Mammary epithelial cell (primary cell): ENCODE measurements at regions of chr19 and their contacts with region 1.

Region 1: DNA sequence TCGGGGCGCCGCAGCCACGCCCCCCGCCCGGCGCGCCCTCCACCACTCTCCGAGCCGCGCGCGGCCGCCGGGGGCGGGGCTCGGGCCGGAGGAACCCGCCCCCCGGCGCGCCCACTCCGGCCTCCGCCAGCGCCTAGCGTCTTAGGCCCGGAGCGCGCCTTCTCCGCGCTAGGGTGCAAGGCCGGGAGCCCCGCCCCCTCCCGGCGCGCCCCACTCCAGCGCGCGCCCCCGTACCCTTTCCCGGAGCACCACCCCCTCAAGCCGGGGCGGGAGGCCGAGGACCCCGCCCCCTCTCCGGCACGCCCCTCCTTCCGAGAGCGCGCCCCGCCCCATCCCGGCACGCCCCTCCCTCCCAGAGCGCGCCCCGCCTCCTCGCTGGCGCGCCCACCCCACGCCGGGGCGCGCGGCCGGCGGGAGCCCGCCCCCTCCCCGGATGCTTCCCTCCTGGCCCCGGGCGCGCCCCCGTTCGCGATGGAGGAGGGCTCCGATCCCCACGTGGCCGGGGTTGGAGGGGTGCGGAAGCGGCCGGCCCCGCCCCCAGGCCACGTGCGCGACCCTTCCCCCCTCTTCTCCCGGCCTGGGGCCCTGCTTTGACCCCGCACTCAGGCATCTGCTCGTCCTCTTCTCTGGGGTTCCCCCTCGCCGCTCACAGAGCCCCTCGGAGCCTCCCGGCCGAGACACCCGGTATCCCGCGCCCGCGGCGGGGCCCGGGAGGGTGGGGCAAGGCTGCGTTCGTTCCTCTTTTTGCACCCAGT is 524 bp upstream of the KLF16 start:
- DNase-seq: peak; percentile 91
- H3K4me3 ChIP-seq: peak overlapping the region; percentile 60 to 71 (median 65)
- H3K27ac ChIP-seq: peak overlapping the region; percentile 64
- H3K4me1 ChIP-seq: peaks cover 33% of the 10 kb centered on the region
- H3K27me3 ChIP-seq: no peaks in the 10 kb centered on the region
- CTCF ChIP-seq: no peak

Region 2: GRCh38 chr19:1875646-1876495 is 12.0 kb after region 1 on chr19:
- CTCF ChIA-PET with region 1: interaction called, 42 read pairs
- dilution Hi-C with region 1: no loop called
- in situ Hi-C with region 1: no loop called
- intact Hi-C with region 1: loop called (anchors 1 kb)
- DNase-seq: peak; percentile 86
- H3K4me3 ChIP-seq: peak overlapping the region; percentile 76 to 100 (median 88)
- H3K27ac ChIP-seq: peak overlapping the region; percentile 73
- H3K4me1 ChIP-seq: peaks cover 28% of the 10 kb centered on the region
- H3K27me3 ChIP-seq: no peaks in the 10 kb centered on the region
- CTCF ChIP-seq: no peak

Region 3: DNA sequence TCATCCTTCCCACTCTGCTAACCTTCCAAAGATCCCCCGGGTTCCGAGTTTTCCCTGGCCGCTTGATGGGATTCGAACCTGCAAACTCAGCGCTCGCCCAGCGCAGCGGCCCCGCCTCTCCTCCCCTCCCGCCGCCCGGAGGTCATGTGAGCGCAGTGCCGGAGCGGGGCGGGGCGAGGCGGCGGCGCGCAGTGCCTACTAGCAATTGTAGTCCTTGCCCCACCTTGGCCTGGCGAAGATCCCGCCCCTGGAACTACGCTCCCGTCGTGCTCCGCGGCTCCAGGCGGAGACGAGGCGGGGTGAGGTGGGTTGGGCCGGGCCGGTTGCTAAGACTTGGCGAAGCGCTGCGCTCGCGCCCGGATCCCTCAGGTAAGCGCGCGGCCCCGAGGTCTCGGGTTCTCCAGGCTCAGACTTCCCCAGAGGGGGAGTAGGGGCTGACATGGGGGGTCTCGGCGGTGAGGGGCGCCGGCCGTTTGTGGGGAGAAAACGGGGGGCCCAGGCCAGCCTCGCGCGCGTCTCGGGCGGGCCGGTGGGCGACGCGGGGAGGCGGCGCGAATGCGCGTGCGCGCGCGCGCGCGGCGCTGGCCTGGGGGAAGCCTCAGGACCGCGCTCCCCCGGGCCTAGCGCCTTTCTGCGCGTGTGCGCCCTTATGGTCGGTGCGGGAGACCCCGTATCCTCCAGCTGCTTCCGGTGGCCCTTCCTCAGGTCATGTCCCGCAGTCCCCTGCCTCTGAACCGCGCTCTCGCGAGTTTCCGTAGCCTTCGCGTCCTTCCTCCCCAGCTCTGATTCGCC is 41.4 kb after region 1 on chr19 and contains the starts of genes ADAT3 and SCAMP4:
- CTCF ChIA-PET with region 1: interaction called, 4 read pairs
- dilution Hi-C with region 1: no loop called
- in situ Hi-C with region 1: no loop called
- intact Hi-C with region 1: loop called (anchors 1 kb)
- DNase-seq: peak; percentile 99
- H3K4me3 ChIP-seq: peak within 1 kb of the TSS; percentile 57 to 80 (median 62)
- H3K27ac ChIP-seq: peak within 1 kb of the TSS; percentile 41
- H3K4me1 ChIP-seq: peaks cover 38% of the 10 kb centered on the region
- H3K27me3 ChIP-seq: no peaks in the 10 kb centered on the region
- CTCF ChIP-seq: no peak
- total RNA-seq, gene ADAT3: 3.5 to 7.3 TPM
- total RNA-seq, gene SCAMP4: 70.2 to 76.5 TPM

Region 4: GRCh38 chr19:1945899-1946298 is 82.0 kb after region 1 on chr19:
- CTCF ChIA-PET with region 1: no interaction called
- dilution Hi-C with region 1: no loop called
- in situ Hi-C with region 1: no loop called
- intact Hi-C with region 1: no loop called
- DNase-seq: no peak
- H3K4me3 ChIP-seq: no peak overlapping the region
- H3K27ac ChIP-seq: no peak overlapping the region
- H3K4me1 ChIP-seq: peaks cover 26% of the 10 kb centered on the region
- H3K27me3 ChIP-seq: no peaks in the 10 kb centered on the region
- CTCF ChIP-seq: peak; percentile 69 to 76